Transverse colon (tissue), 4 donors: ENCODE measurements at regions of chr22 and their contacts with region 1.

Region 1: GRCh38 chr22:29031227-29032011 is 30.2 kb downstream of the C22orf31 start:
- DNase-seq: peak; percentile 40
- H3K4me3 ChIP-seq: peak overlapping the region in 3 of 4 donors; percentile 43 to 50 (median 45)
- H3K27ac ChIP-seq: peak overlapping the region; percentile 78 to 85 (median 83)
- H3K4me1 ChIP-seq: peaks cover 13 to 47% (median 26%) of the 10 kb centered on the region in 4 donors
- H3K27me3 ChIP-seq: no peaks in the 10 kb centered on the region
- CTCF ChIP-seq: peak in 3 of 5 experiments; percentile 7 to 24 (median 7)
- EP300 ChIP-seq: no peak
- POLR2A ChIP-seq: no peak

Region 2: GRCh38 chr22:28955817-28956216 is 75.6 kb before region 1 on chr22:
- in situ Hi-C with region 1: no loop called
- intact Hi-C with region 1: loop called (anchors 5 kb)
- DNase-seq: peak; percentile 24
- H3K4me3 ChIP-seq: no peak overlapping the region
- H3K27ac ChIP-seq: no peak overlapping the region
- H3K4me1 ChIP-seq: peaks cover 0 to 32% (median 14%) of the 10 kb centered on the region in 4 donors
- H3K27me3 ChIP-seq: no peaks in the 10 kb centered on the region
- CTCF ChIP-seq: no peak
- EP300 ChIP-seq: no peak
- POLR2A ChIP-seq: no peak

Region 3: GRCh38 chr22:28969401-28970168 is 61.8 kb before region 1 on chr22:
- in situ Hi-C with region 1: no loop called
- intact Hi-C with region 1: no loop called
- DNase-seq: no peak
- H3K4me3 ChIP-seq: no peak overlapping the region
- H3K27ac ChIP-seq: no peak overlapping the region
- H3K4me1 ChIP-seq: peaks cover 0 to 19% (median 2%) of the 10 kb centered on the region in 4 donors
- H3K27me3 ChIP-seq: no peaks in the 10 kb centered on the region
- CTCF ChIP-seq: no peak
- EP300 ChIP-seq: no peak
- POLR2A ChIP-seq: no peak

Region 4: DNA sequence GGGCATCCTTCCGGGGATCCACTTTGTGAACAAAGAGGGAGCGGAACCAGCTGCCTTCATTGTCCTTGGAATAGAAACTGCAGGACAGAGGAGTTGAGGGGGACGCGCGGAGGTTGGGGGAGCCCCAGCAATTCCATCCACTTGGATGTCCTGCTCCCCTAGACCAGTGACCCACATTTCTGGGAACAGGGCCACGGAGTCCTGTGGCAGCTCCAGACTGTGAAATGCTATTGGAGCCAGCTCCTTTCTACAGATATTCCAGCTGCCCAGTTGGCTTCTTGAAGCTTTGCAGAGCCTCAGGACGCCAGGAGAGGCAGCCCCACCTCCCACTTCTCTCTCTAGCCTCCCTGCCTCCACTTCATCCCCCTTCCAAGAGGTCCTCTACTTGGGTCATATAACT is 539.0 kb after region 1 on chr22:
- in situ Hi-C with region 1: no loop called
- intact Hi-C with region 1: no loop called
- DNase-seq: no peak
- H3K4me3 ChIP-seq: no peak overlapping the region
- H3K27ac ChIP-seq: no peak overlapping the region
- H3K4me1 ChIP-seq: no peaks in the 10 kb centered on the region
- H3K27me3 ChIP-seq: no peaks in the 10 kb centered on the region
- CTCF ChIP-seq: no peak
- EP300 ChIP-seq: no peak
- POLR2A ChIP-seq: no peak